ENCODE measurements at regions of chr10 and their contacts with region 1.

Region 1: DNA sequence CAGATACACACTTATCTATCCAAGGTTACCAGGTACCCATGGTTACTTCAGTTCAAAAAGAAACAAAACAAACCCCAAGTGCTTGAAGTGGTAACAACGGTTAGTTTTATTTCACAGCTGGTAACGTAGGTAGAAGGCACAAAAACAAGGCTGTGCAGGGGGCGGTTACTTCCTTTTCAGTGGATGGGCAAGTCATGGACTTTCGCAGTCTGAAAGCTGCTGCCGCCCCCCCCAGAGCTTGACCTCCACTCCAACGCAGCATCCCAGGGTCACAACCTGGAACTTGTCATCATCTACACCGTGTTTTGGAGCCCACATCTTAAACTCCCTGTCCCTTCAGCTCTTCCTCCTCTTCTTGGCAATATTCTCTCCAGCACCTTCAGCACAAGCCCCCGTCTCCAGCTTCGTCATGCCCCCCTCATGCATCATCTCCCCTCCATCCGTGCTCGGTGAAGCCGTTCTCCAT is 181.2 kb upstream of the ITGB1 start:
- DNase-seq: peak; percentile 56 to 96 (median 89)
- H3K4me3 ChIP-seq: peak overlapping the region; percentile 52
- H3K4me3 Mint-ChIP-seq: peak overlapping the region; percentile 44 to 89 (median 75)
- H3K27ac ChIP-seq: peak overlapping the region; percentile 77
- H3K27ac Mint-ChIP-seq: peak overlapping the region; percentile 85 to 100 (median 98)
- H3K4me1 ChIP-seq: peaks cover 71% of the 10 kb centered on the region
- H3K4me1 Mint-ChIP-seq: peaks cover 73 to 92% (median 88%) of the 10 kb centered on the region in 3 donors
- H3K27me3 ChIP-seq: no peaks in the 10 kb centered on the region
- H3K27me3 Mint-ChIP-seq: peaks cover 0 to 2% of the 10 kb centered on the region in 2 donors

Region 2: GRCh38 chr10:33008499-33009243 is 130.5 kb before region 1 on chr10:
- CTCF ChIA-PET with region 1: interaction called, 10 read pairs
- POLR2A ChIA-PET with region 1: no interaction called
- DNase-seq: peak; percentile 39 to 66 (median 46)
- H3K4me3 ChIP-seq: peak overlapping the region; percentile 63
- H3K4me3 Mint-ChIP-seq: peak overlapping the region; percentile 29 to 82 (median 64)
- H3K27ac ChIP-seq: peak overlapping the region; percentile 22
- H3K27ac Mint-ChIP-seq: peak overlapping the region; percentile 41 to 97 (median 92)
- H3K4me1 ChIP-seq: peaks cover 27% of the 10 kb centered on the region
- H3K4me1 Mint-ChIP-seq: peaks cover 44 to 60% (median 52%) of the 10 kb centered on the region in 3 donors
- H3K27me3 ChIP-seq: no peaks in the 10 kb centered on the region
- H3K27me3 Mint-ChIP-seq: peaks cover 0 to 2% of the 10 kb centered on the region in 2 donors

Region 3: GRCh38 chr10:33115738-33116719 is 23.2 kb before region 1 on chr10:
- CTCF ChIA-PET with region 1: interaction called, 27 read pairs
- POLR2A ChIA-PET with region 1: interaction called, 10 read pairs
- DNase-seq: peak in 2 of 5 donors; percentile 22 to 37
- H3K4me3 ChIP-seq: peak overlapping the region; percentile 7
- H3K4me3 Mint-ChIP-seq: peak overlapping the region; percentile 57 to 86 (median 77)
- H3K27ac ChIP-seq: peak overlapping the region; percentile 45
- H3K27ac Mint-ChIP-seq: peak overlapping the region; percentile 89 to 98 (median 94)
- H3K4me1 ChIP-seq: peaks cover 86% of the 10 kb centered on the region
- H3K4me1 Mint-ChIP-seq: peaks cover 92 to 99% (median 97%) of the 10 kb centered on the region in 3 donors
- H3K27me3 ChIP-seq: no peaks in the 10 kb centered on the region
- H3K27me3 Mint-ChIP-seq: no peaks in the 10 kb centered on the region

Region 4: DNA sequence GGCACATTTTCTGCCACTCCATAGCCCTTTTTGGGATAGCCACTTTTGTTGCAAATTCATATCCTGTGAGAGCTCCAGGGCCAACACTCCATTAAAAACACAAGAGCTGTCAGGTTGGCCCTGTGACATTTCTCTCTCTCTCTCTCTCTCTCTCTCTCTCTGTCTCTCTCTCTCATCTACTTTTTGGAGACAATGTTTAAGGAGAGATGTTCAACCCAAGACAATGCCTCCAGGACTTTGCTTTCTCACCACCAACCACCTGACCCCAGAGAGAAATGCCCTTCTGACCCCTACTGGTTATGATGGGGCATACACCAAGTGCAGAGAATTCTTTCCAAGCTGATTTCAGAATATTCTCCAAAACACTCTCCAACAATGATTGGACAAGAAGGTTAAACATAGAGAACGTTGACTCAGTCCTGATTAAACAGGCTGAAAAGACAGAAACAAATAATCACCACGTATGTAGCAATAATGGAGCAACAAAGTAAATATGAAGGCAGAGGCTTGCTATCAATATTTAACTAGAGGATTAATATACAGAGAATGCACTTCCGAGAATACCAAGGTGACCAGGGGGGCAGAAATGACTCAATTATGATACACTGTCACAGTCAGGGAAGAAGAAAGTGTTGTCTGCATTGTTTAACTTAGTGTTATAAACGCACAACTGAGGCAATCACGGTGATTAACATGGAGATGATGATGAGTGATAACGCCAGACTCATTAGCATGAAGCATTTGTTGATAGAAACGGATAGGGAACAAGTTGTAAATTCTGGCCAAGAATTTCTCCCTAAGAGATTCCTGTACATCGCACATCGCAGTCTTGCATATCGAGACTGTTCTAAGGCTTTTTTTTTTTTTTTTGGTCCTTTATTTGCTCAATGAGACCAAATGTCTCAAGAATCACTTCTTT is 16.8 kb after region 1 on chr10:
- CTCF ChIA-PET with region 1: interaction called, 15 read pairs
- POLR2A ChIA-PET with region 1: interaction called, 7 read pairs
- DNase-seq: peak in 3 of 5 donors; percentile 59 to 61 (median 60)
- H3K4me3 ChIP-seq: no peak overlapping the region
- H3K4me3 Mint-ChIP-seq: peak overlapping the region in 3 of 7 donors; percentile 14 to 45 (median 29)
- H3K27ac ChIP-seq: no peak overlapping the region
- H3K27ac Mint-ChIP-seq: peak overlapping the region in 6 of 8 donors; percentile 48 to 97 (median 86)
- H3K4me1 ChIP-seq: peaks cover 33% of the 10 kb centered on the region
- H3K4me1 Mint-ChIP-seq: peaks cover 29 to 50% (median 41%) of the 10 kb centered on the region in 3 donors
- H3K27me3 ChIP-seq: no peaks in the 10 kb centered on the region
- H3K27me3 Mint-ChIP-seq: peaks cover 0 to 8% of the 10 kb centered on the region in 2 donors

Measured in CD8-positive, alpha-beta memory T cell (primary cell).